ENCODE measurements at regions of chr11 and their contacts with region 1.

Region 1: DNA sequence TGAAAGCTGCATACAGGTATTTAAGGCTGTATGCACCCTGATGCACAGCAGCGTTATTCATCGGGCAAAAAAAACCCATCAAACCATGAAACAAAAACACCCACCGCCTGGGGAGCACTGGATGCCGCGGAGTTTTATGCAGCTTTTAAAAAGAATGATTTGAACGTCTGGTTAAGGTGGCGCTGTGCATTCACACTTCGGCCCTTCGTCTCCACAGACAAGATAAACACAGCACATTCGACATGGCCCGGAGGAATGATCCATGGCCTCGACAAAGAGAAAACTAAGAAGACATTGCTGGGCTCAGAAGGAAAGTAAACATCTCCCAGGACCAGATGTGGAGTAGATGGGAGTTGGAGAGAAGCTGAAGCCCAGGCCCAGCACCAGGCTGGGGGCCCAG is 40.8 kb upstream of the GAL start:
- DNase-seq: no peak
- H3K4me3 ChIP-seq: no peak overlapping the region
- H3K27ac ChIP-seq: no peak overlapping the region
- H3K4me1 ChIP-seq: no peaks in the 10 kb centered on the region
- H3K27me3 ChIP-seq: peaks cover 0 to 45% (median 0%) of the 10 kb centered on the region in 4 donors
- CTCF ChIP-seq: peak in 1 of 6 experiments; percentile 6
- POLR2A ChIP-seq: no peak

Region 2: GRCh38 chr11:68517121-68517741 is 126.4 kb before region 1 on chr11:
- intact Hi-C with region 1: loop called (anchors 5 kb)
- DNase-seq: no peak
- H3K4me3 ChIP-seq: no peak overlapping the region
- H3K27ac ChIP-seq: no peak overlapping the region
- H3K4me1 ChIP-seq: no peaks in the 10 kb centered on the region
- H3K27me3 ChIP-seq: no peaks in the 10 kb centered on the region
- CTCF ChIP-seq: no peak
- POLR2A ChIP-seq: no peak